Activated CD8-positive, alpha-beta T cell treated with anti-CD3 and anti-CD28 coated beads, Interleukin-2, amount 10 ng/mL, durations not matched to agents 7 days and 5 days (primary cell): ENCODE measurements at regions of chr2 and their contacts with region 1.

Region 1: DNA sequence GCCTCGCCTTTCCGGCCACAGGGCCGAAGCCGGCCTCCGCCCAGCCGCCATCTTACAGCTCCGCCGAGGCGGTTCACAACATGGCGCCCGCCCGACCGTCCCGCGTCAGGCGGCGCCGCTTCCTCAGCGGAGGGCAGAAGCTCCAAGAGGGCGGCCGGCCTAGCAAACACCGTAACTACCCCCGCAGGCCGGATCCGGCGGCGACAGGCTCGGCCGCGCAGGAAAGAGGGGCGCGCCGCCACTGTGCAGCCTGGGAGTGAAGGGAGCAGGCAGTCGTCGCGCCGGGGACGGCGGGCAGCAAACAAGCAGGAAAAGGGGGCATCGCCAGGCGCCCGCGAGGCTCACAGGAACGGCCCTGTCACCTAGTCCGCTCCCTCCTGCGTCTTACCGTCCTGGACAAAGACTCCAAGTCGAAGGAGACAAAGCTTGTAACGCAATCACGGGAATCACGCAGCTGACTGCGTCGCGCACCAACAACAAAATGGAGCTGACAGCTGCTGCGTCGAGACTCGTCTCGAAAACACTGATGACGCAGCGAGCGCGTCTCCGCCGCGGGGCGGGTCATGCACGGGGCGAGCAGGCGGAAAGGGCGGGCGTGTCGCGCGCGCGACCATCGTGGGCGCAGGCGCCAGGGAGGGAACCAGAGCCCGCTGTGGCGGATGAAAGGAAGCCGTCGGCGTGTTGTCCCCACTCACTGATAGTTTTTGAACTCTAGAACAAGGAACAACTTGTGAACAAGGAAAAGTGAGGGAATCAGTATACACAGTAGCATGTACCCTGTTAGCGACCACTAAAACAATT is at the start of gene CLK1:
- DNase-seq: peak; percentile 97
- ATAC-seq: peak; percentile 82
- H3K4me3 Mint-ChIP-seq: peak within 1 kb of the TSS; percentile 95
- H3K27ac Mint-ChIP-seq: peak within 1 kb of the TSS; percentile 100
- H3K4me1 Mint-ChIP-seq: peaks cover 43% of the 10 kb centered on the region
- H3K27me3 Mint-ChIP-seq: no peaks in the 10 kb centered on the region
- total RNA-seq, gene CLK1: 122 to 126 TPM

Region 2: DNA sequence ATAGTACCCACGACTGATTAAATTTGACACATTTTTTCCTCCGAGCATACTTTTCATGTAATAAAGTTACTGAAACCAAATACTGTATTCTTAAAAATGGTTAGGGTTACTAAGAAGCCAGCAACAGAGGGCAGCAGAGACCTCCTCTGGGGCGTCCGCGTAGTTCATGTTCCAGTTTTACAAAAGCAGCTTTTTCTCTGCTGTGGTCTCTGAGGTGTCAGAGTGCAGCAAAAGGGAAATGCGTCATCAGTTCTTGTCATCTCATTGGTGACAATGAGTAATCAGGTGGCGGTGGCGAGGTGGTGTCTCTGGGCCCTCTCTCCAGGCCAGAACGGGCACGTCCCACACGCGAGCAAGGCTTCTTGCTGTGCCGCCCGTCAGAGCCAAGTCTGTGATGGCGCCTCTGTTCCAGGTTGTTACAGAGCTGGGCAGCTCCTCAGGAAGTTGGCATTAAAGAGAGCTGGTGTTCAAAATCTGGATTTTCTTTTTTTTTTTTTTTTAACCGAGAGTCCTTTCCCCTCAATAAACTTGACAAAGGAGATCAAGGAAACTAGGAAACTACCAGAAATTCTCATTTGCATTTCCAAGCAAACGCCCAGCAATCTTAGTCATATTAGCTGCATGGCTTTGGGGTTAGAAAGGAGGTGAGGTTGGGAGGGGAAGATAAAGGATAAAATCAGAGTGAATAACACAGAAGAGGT is 151.2 kb before region 1 on chr2:
- CTCF ChIA-PET with region 1: interaction called, 9 read pairs
- POLR2A ChIA-PET with region 1: interaction called, 21 read pairs
- DNase-seq: peak; percentile 97
- ATAC-seq: peak; percentile 99
- H3K4me3 Mint-ChIP-seq: peak overlapping the region; percentile 71
- H3K27ac Mint-ChIP-seq: peak overlapping the region; percentile 98
- H3K4me1 Mint-ChIP-seq: peaks cover 18% of the 10 kb centered on the region
- H3K27me3 Mint-ChIP-seq: no peaks in the 10 kb centered on the region

Region 3: GRCh38 chr2:200772620-200773019 is 91.8 kb before region 1 on chr2:
- CTCF ChIA-PET with region 1: no interaction called
- POLR2A ChIA-PET with region 1: no interaction called
- DNase-seq: no peak
- ATAC-seq: no peak
- H3K4me3 Mint-ChIP-seq: no peak overlapping the region
- H3K27ac Mint-ChIP-seq: no peak overlapping the region
- H3K4me1 Mint-ChIP-seq: peaks cover 2% of the 10 kb centered on the region
- H3K27me3 Mint-ChIP-seq: peaks cover 3% of the 10 kb centered on the region

Region 4: DNA sequence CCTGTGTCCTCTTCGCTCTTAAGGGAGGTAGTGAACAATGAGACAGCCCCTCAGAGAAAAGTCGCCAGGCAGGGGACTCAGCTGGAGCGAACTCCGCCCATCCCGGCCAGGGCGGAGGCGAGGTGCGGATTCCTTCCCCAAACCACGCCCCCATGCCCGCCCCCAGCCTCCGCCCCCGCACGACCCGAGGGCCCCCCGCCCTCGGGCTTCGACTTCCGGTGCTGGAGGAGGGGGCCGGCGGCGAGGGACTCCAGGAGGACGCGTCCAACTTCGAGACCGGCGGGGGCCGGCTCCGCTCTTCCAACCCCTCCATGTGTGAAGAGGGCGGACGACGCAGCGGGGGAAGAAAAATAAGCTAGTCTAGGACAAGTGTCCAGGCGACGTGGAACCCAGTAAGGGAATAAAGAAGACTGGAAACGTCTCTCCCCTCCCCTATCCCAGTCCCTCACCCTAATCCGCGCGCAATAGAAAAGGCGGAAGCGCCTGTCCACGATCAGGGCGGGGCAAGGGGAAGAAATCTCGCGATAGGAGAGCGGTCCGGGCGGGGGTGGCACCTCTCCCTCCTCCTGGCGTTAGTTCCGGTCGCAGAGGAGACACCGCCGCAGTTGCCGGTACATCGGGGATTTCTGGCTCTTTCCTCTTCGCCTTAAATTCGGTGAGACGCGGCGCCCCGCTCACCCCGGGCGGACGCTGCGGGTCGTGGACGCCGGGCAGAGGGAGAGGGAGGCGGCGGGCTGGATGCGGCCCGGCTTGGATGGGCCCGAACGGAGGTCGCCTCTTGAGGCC is 52.8 kb before region 1 on chr2 and contains the start of gene BZW1:
- CTCF ChIA-PET with region 1: interaction called, 4 read pairs
- POLR2A ChIA-PET with region 1: interaction called, 17 read pairs
- DNase-seq: peak; percentile 98
- ATAC-seq: peak; percentile 84
- H3K4me3 Mint-ChIP-seq: peak within 1 kb of the TSS; percentile 99
- H3K27ac Mint-ChIP-seq: peak within 1 kb of the TSS; percentile 99
- H3K4me1 Mint-ChIP-seq: peaks cover 52% of the 10 kb centered on the region
- H3K27me3 Mint-ChIP-seq: no peaks in the 10 kb centered on the region
- total RNA-seq, gene BZW1: 276 to 304 TPM

Region 5: DNA sequence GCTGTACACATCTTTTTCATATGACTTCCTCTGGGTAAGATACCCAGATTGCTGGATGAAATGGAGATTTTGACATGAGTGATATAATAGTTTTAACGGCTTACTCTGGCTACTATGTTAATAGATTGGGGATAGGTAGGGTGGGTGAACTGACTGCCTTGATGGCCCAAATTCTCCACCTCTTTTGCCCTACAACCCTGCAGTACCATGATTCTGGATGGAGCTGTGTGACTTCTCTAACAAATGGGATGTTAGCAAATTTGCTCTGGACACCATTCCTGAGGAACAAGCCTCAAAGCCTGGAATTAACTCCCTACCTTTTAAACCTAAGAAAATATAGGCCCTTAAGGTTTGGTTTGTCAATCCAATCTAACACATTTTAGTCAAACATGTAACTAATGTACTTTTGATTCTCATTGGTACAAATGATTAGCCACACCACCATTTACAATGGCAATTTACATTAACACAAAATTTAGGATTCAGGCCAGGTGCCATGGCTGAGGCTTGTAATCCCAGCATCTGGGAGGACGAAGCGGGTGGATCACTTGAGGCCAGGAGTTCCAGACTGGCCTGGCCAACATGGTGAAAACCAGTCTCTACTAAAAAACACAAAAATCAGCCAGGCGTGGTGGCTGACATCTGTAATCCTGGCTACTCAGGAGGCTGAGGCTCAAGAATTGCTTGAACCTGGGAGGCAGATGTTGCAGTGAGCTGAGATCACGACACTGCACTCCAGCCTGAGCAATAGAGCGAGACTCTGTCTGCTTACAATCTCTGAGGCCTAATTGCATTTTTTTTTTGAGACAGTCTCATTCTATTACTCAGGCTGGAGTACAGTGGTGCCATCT is 12.8 kb before region 1 on chr2:
- CTCF ChIA-PET with region 1: no interaction called
- POLR2A ChIA-PET with region 1: interaction called, 13 read pairs
- DNase-seq: no peak
- ATAC-seq: no peak
- H3K4me3 Mint-ChIP-seq: no peak overlapping the region
- H3K27ac Mint-ChIP-seq: no peak overlapping the region
- H3K4me1 Mint-ChIP-seq: peaks cover 7% of the 10 kb centered on the region
- H3K27me3 Mint-ChIP-seq: no peaks in the 10 kb centered on the region

Region 6: GRCh38 chr2:200888704-200889625 is 24.6 kb after region 1 on chr2 and contains the starts of genes NIF3L1 and PPIL3:
- CTCF ChIA-PET with region 1: interaction called, 15 read pairs
- POLR2A ChIA-PET with region 1: interaction called, 138 read pairs
- DNase-seq: peak; percentile 99
- ATAC-seq: peak; percentile 86
- H3K4me3 Mint-ChIP-seq: peak within 1 kb of the TSS; percentile 90
- H3K27ac Mint-ChIP-seq: peak within 1 kb of the TSS; percentile 98
- H3K4me1 Mint-ChIP-seq: peaks cover 49% of the 10 kb centered on the region
- H3K27me3 Mint-ChIP-seq: no peaks in the 10 kb centered on the region
- total RNA-seq, gene NIF3L1: 37.0 to 39.0 TPM
- total RNA-seq, gene PPIL3: 81.6 to 82.9 TPM

Region 7: GRCh38 chr2:200944467-200945394 is 80.4 kb after region 1 on chr2:
- CTCF ChIA-PET with region 1: no interaction called
- POLR2A ChIA-PET with region 1: no interaction called
- DNase-seq: peak; percentile 30
- ATAC-seq: no peak
- H3K4me3 Mint-ChIP-seq: no peak overlapping the region
- H3K27ac Mint-ChIP-seq: no peak overlapping the region
- H3K4me1 Mint-ChIP-seq: no peaks in the 10 kb centered on the region
- H3K27me3 Mint-ChIP-seq: no peaks in the 10 kb centered on the region

Region 8: GRCh38 chr2:201118121-201118960 is 254.0 kb after region 1 on chr2:
- CTCF ChIA-PET with region 1: interaction called, 3 read pairs
- POLR2A ChIA-PET with region 1: interaction called, 77 read pairs
- DNase-seq: peak; percentile 93
- ATAC-seq: peak; percentile 45
- H3K4me3 Mint-ChIP-seq: peak overlapping the region; percentile 97
- H3K27ac Mint-ChIP-seq: peak overlapping the region; percentile 99
- H3K4me1 Mint-ChIP-seq: peaks cover 56% of the 10 kb centered on the region
- H3K27me3 Mint-ChIP-seq: no peaks in the 10 kb centered on the region

Region 9: GRCh38 chr2:201182650-201183364 is 318.4 kb after region 1 on chr2 and contains the start of gene CASP10:
- CTCF ChIA-PET with region 1: interaction called, 5 read pairs
- POLR2A ChIA-PET with region 1: interaction called, 16 read pairs
- DNase-seq: peak; percentile 60
- ATAC-seq: peak; percentile 79
- H3K4me3 Mint-ChIP-seq: peak within 1 kb of the TSS; percentile 97
- H3K27ac Mint-ChIP-seq: peak within 1 kb of the TSS; percentile 93
- H3K4me1 Mint-ChIP-seq: peaks cover 46% of the 10 kb centered on the region
- H3K27me3 Mint-ChIP-seq: no peaks in the 10 kb centered on the region
- total RNA-seq, gene CASP10: 40.7 to 42.8 TPM